Activated T-helper 1 cell treated with anti-CD3 and anti-CD28 coated beads, Interleukin-12 subunit alpha, Interleukin-12 subunit beta, Interleukin-2, Interleukin-4 antibody, amounts not matched to agents 30 ng/mL and 10 ng/mL and 1 ng/mL, durations not matched to agents 14 hours and 24 hours and 36 hours (primary cell): ENCODE measurements at regions of chr6 and their contacts with region 1.

Region 1: GRCh38 chr6:108492131-108492766 is 68.5 kb upstream of the FOXO3 start:
- DNase-seq: no peak
- H3K4me3 Mint-ChIP-seq: no peak overlapping the region
- H3K27ac Mint-ChIP-seq: no peak overlapping the region
- H3K4me1 Mint-ChIP-seq: no peaks in the 10 kb centered on the region
- H3K27me3 Mint-ChIP-seq: peaks cover 9% of the 10 kb centered on the region

Region 2: GRCh38 chr6:107989166-107990094 is 502.8 kb before region 1 on chr6:
- intact Hi-C with region 1: loop called (anchors 10 kb)
- DNase-seq: no peak
- H3K4me3 Mint-ChIP-seq: no peak overlapping the region
- H3K27ac Mint-ChIP-seq: no peak overlapping the region
- H3K4me1 Mint-ChIP-seq: peaks cover 7% of the 10 kb centered on the region
- H3K27me3 Mint-ChIP-seq: no peaks in the 10 kb centered on the region

Region 3: DNA sequence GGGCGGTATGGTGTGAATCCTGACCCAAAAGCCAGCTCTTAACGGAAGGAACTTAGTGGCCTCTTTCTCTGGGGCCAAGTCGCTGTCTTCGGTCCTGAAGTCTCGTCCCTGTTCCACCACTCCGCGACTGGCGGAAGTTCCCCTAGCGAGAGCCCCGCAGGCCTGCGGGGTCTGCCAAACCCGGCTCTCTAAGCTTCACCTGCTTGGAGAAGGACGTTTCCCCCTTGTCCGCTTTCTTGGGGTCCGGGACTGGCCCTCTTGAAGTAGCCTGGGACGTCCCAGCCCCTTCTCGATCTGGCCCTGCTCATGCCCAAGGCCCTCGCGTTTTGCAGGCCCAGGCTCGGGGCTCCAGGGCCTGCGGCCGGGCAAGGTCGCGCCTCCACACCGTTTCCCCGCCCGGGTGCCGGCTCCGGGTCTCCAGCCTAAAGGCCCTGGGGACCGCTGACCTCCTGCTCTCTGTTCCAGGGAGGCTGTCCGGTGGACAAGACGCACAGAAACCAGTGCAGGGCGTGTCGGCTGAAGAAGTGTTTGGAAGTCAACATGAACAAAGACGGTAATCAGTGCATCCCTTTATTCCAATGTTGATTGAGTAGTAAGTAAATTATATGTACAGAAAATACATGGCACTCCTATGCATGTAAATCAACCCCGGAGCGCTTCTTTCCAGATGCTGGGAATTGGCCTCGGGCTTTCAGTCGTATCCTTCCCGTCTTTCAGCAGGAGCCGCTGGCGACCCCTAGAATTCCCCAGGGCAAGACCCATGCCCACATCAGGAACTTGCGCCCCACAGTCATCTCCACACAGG is 317.7 kb before region 1 on chr6:
- intact Hi-C with region 1: loop called (anchors 2 kb)
- DNase-seq: peak; percentile 20
- H3K4me3 Mint-ChIP-seq: no peak overlapping the region
- H3K27ac Mint-ChIP-seq: no peak overlapping the region
- H3K4me1 Mint-ChIP-seq: peaks cover 5% of the 10 kb centered on the region
- H3K27me3 Mint-ChIP-seq: peaks cover 93% of the 10 kb centered on the region

Region 4: DNA sequence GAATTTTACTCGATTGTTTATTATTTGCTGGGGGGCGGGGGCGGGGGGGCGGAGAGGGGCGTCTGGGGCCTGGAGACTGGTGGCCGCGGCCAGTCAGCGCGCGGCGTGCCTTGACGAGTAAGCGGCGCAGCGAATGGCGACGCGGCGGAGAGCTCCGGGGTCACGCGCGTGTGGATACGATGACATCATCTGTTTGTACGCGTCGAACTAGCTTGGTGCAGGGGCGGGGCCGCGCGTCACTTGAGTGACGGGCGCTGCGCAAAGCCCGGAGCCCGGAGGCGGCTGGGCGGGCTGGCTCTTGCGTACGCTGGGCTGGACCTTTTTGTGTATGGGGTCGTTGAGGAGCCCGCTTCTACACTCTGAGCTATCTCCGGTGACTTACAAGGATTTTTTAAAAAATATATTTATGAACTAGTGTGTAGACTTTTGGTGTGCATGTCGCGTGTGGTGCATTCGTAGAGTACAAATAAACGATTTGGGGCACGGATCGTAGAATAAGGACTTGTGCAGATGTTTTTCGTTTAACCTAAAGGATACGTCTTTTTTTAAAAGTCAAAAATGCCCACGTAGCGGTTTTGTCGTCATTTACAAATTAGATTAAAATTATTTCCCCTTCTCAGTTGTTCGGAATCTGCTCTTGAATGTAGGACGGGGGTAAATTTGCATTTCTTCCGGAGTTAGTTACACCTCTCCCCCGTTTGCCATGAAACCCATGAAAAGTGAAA is 66.3 kb after region 1 on chr6:
- intact Hi-C with region 1: no loop called
- DNase-seq: peak; percentile 95
- H3K4me3 Mint-ChIP-seq: peak overlapping the region; percentile 88
- H3K27ac Mint-ChIP-seq: peak overlapping the region; percentile 91
- H3K4me1 Mint-ChIP-seq: peaks cover 32% of the 10 kb centered on the region
- H3K27me3 Mint-ChIP-seq: peaks cover 47% of the 10 kb centered on the region